ENCODE measurements at regions of chr1 and their contacts with region 1.

Region 1: DNA sequence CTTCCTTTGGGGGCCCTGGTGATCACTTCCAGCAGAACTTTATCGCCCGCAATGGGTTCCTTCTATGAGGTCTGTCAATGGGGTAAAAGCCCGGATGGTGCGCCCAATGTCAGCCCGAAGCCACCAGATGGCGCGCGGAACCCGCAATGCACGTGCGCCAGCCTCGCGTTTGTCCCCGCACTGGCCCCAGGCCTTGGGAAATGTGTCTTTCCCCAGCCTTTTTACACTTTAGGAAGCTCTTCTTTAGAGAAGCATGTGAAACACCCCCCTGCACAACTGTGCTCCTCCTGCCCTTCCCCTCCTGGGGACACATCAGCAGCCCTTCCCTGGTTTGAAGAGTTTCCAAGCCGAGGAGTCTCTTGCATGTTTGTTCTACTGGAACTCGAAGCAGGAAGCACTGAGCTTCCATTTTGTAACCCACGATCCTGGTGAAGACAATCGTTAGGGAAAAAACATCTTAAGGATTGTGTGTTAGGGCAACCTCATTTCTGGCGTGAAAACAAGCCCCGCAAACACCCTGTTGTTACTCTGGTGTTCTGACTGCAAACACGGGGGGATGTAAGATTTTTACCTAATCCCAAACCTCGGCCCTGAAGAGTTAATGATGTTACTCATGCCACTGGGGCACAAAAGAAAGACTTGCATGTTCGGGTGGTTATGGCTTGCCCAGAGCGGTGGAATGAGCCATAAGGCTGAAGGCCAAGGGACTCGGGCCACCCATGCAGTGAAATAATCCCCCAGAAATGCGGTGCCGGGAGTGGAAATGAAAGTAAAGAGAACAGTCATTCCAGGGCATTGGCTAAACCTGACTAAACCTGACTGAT is 20.4 kb upstream of the TARBP1 start:
- DNase-seq: peak; percentile 88
- H3K4me3 Mint-ChIP-seq: no peak overlapping the region
- H3K27ac Mint-ChIP-seq: peak overlapping the region; percentile 61
- H3K4me1 Mint-ChIP-seq: peaks cover 42% of the 10 kb centered on the region
- H3K27me3 Mint-ChIP-seq: peaks cover 13% of the 10 kb centered on the region

Region 2: GRCh38 chr1:234486498-234487448 is 12.6 kb before region 1 on chr1:
- CTCF ChIA-PET with region 1: interaction called, 25 read pairs
- DNase-seq: peak; percentile 60
- H3K4me3 Mint-ChIP-seq: no peak overlapping the region
- H3K27ac Mint-ChIP-seq: peak overlapping the region; percentile 70
- H3K4me1 Mint-ChIP-seq: peaks cover 35% of the 10 kb centered on the region
- H3K27me3 Mint-ChIP-seq: peaks cover 29% of the 10 kb centered on the region

Region 3: DNA sequence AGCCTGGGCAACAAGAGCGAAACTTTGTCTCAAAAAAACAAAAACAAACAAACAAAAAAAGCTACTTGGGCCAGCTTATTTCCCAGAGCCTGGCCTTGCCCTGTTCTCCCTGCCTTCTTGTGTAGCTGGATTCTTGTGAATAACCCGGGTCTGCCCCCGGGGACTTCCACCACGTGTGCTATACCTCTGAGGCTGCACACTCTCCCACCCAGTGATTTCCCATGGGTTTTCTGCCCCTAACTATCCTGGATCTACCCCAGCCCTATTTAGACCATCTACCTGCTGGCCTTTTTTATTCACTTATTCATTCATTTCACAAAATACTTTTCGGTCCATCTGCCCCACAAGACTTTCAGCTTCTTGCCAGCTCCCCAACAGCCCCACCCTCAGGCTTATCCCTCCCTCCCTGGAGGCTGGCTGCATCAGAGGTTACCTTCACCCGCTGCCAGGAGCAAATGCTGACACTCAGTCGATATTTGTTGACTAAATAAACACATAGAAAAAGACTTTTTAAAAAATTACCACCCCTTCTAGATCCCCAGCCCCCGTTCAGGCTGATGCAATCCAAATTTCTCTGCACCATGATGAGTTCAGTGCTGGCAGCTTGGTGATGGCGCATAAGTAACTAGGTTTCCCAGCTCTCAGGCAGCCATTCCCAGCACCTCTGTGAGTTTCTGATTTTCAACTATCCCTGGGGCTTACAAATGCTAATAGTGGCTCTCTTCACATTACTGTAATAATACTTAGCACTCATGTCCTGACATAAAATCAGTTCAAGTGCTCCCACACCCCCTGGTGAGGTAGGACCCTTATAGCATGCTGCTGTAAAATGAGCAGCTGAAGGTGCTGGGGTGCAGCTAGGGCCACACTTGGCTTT is 10.4 kb after region 1 on chr1:
- CTCF ChIA-PET with region 1: interaction called, 12 read pairs
- DNase-seq: no peak
- H3K4me3 Mint-ChIP-seq: no peak overlapping the region
- H3K27ac Mint-ChIP-seq: no peak overlapping the region
- H3K4me1 Mint-ChIP-seq: peaks cover 8% of the 10 kb centered on the region
- H3K27me3 Mint-ChIP-seq: peaks cover 7% of the 10 kb centered on the region

Region 4: DNA sequence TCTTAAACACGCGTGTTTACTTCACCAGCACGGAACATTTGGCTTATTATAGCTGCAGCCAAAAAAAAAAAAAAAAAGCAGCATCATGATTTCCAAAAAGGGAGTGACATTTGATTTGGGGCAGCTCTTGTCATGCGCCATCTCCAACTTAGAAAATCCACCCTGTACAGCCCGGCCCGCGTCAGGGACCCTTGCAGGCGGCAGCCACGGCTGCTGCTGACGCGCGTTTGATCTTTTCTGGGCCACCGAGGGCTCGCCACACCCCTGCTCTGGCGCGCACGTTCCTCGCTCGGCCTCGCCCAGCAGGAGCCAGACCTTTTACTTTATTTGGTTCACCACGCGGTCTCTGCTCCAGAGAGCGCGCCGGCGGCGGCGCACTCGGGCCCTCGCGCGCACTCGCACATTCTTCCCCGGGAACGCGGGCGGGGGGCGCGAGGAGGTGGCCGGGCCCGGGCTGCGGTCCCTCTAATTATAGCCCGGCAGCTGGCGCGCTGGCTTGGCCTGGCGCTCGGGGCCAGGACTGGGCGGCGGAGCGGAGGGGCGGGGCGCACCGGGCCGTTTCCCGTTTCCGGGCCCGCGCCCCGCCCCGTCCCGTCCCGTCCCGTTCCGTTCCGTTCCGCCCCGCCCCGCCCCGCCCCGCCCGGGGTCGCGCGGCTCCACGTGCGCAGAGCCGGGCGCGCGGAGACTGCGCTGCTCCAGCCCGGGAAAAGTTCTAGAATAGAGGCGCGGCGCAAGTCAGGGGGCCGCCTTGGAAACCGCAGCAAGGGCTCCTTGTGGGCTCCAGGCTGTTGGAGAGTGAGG is 100.5 kb after region 1 on chr1:
- CTCF ChIA-PET with region 1: interaction called, 21 read pairs
- DNase-seq: peak; percentile 81
- H3K4me3 Mint-ChIP-seq: peak overlapping the region; percentile 82
- H3K27ac Mint-ChIP-seq: peak overlapping the region; percentile 98
- H3K4me1 Mint-ChIP-seq: peaks cover 63% of the 10 kb centered on the region
- H3K27me3 Mint-ChIP-seq: no peaks in the 10 kb centered on the region

Region 5: DNA sequence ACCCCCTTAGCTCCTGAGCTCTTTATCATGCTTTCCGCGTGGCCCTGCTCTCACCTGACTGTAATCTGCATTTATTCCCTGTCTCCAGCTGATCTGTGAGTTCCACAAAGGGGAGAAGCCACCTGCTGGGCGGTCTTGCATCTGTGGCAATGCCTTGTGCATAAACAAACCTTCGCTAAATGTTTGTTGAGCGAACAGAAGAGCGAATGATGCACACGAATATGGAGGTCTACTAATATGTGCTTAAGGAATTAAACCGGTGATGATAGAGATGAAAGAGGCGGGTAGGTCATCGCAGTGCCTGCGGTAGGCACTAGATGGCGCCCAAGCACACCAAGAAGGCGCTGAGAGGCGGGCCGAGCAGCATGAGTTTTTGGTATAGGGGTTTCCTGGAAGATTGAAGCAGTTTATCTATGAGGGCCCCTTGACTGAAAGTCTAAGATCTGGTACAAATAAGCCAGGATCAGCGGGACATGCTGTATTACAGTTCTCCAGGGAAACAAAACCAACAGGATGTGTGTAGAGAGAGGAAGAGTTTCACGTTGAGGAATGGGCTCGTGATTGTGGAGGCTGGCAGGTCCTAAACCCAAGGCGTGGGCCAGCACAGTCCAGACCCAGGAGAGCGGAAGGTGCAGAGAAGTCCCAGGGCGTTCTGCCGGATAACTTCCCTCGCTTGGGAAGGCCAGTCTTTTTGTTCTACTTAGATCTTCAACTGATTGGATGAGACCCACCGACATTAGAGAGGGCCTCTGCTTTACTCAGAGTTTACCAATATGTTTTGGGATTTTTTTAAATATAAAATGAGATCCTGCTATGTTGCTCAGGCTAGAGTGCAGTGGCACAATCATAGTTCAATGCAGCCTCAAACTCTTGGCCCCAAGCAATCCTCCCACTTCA is 594.6 kb after region 1 on chr1:
- CTCF ChIA-PET with region 1: interaction called, 19 read pairs
- DNase-seq: peak; percentile 88
- H3K4me3 Mint-ChIP-seq: no peak overlapping the region
- H3K27ac Mint-ChIP-seq: no peak overlapping the region
- H3K4me1 Mint-ChIP-seq: peaks cover 7% of the 10 kb centered on the region
- H3K27me3 Mint-ChIP-seq: peaks cover 39% of the 10 kb centered on the region

Measured in activated naive CD4-positive, alpha-beta T cell treated with anti-CD3 and anti-CD28 coated beads, Interleukin-2, amount 10 ng/mL, durations not matched to agents 7 days and 5 days (primary cell).